Activated CD4-positive, alpha-beta memory T cell treated with anti-CD3 and anti-CD28 coated beads for 36 hours (primary cell): ENCODE measurements at regions of chr5 and their contacts with region 1.

Region 1: DNA sequence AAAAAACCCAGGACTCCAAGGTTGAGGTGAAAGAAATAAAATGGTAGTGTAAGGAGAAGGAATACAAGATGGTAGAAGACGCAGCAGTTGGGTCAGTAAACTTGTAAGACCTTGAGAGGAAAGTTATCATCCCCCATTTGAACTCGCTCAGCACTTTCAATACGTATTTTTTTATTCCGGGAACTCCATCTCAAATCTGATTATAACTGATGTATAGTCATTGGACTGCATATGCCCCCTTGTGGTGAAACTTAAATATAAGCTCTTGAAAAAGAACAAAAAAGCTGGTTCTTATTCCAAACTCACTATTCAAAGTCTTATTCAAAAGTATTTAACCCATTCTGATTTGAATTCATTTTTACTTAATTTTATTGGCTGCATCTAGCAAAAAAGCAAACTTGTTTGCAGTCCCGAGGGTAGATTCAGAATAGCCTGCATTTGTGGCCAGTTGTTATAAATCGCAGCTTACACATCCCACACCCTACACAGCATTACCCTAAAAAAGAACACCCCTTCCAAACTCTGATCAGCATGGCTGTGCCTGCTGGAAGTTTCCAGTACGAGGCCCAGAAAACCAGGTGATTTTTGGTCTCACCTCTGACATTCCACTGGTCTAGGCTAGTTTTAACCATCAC is 118.0 kb downstream of the ESM1 start:
- DNase-seq: no peak
- H3K4me3 Mint-ChIP-seq: no peak overlapping the region
- H3K27ac Mint-ChIP-seq: no peak overlapping the region
- H3K4me1 Mint-ChIP-seq: peaks cover 20% of the 10 kb centered on the region
- H3K27me3 Mint-ChIP-seq: peaks cover 40% of the 10 kb centered on the region

Region 2: DNA sequence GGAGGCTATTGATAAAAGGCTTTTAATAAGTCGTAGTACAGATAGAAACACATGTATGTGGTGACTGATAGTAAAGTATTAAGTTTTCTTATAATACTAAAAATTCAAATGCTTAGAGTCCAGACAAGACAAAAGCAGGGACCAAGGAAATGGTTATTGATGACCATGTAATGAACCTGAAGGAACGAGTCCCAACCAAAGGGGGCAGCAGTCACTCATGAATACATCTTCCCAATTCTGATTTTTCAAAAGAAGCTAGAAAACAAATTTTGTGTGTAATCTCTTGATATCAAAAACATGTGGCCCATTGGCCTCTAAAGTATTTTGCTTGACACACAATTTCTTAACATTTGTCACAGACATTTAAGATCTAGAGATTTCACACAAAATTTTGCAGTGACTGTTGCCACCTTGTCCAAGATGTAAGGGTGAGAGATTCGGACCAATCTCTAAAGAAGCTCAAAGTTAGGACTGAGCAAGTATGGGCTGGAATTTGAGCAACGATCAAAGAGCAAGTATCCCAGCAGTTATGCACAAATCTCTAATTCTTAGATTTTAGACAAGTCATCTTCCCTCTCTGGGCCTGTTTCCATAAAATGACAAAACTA is 623.9 kb before region 1 on chr5:
- CTCF ChIA-PET with region 1: interaction called, 3 read pairs
- POLR2A ChIA-PET with region 1: no interaction called
- intact Hi-C with region 1: loop called (anchors 10 kb)
- DNase-seq: peak; percentile 34
- H3K4me3 Mint-ChIP-seq: no peak overlapping the region
- H3K27ac Mint-ChIP-seq: no peak overlapping the region
- H3K4me1 Mint-ChIP-seq: no peaks in the 10 kb centered on the region
- H3K27me3 Mint-ChIP-seq: no peaks in the 10 kb centered on the region

Region 3: DNA sequence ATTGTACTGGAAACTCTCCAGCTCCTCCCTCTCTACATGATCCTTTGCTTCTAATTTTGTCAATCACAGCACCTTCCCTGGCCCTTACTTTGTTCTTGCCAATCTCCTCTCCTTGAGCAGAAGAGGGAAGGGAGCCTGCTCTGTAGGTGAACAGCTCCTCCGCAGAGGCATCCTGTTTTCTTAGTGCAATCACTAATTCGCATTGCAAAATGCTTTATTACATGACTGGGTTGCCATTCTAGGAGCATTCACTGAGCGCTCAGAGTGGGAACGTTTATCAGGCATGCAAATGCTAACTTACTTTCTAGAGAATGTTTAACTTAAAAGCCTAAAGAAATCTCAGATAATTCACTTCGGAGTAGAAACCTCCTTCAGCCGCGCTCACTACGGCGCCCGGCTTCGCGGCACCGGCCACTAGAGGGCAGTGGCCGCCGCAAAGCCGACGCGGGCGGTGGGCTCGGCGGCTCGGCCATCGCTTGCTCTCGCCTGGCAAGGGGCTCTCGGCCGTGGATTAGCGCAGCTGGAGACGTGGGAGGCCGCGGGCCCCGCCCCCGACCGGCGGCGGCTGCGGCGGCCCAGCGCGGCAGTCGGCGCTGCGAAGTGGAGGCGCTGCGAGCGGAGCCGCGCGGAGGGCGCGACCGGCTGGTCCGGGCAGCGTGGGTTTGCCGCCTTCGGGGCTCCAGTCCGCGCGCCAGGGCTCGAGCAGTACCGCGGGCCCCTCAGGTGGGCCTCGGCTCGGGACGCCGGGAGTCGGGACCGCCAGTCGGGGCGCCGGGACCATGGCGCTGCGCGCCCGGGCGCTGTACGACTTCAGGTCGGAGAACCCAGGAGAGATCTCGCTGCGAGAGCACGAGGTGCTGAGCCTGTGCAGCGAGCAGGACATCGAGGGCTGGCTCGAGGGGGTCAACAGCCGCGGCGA is 350.0 kb before region 1 on chr5 and contains the start of gene SNX18:
- CTCF ChIA-PET with region 1: interaction called, 77 read pairs
- POLR2A ChIA-PET with region 1: no interaction called
- intact Hi-C with region 1: loop called (anchors 1 kb)
- DNase-seq: peak; percentile 92
- H3K4me3 Mint-ChIP-seq: peak within 1 kb of the TSS; percentile 64
- H3K27ac Mint-ChIP-seq: no peak within 1 kb of the TSS
- H3K4me1 Mint-ChIP-seq: peaks cover 42% of the 10 kb centered on the region
- H3K27me3 Mint-ChIP-seq: no peaks in the 10 kb centered on the region
- total RNA-seq, gene SNX18: 8.5 to 8.7 TPM

Region 4: DNA sequence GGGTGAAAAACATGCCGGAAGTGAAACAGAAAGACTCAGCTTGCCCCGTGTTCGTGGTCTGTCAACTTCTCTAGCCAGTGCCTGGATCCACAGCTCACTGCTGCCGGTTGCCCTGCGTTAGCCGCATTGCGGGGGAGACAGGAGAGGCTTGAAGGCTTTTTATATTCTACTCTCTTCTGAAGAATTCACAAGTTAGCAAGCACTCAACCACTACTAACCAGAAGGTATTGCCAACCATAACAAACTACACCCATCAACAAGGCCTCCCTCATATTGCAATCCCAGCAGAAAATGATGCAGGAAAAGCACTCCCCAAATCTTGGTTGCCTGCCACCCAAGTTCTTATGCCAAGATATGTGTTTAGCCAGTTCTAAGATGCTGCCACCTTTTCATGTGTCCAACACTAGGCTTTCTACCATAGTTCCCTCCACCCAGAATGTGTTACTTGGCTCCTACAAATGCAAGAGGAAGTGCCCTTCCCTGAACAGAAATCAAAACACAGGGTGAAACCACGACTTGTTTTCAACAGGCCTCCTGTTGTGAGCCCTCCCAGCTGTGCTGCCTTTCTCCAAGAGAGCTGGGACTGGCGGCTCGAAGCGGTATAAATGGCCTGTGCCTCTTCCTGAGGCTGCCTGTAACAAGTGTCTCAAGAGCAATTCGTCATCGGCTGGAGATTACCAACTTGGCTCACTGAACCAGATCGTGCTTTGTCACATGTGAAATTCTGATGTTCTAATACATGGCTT is 220.9 kb before region 1 on chr5:
- CTCF ChIA-PET with region 1: no interaction called
- POLR2A ChIA-PET with region 1: no interaction called
- intact Hi-C with region 1: loop called (anchors 5 kb)
- DNase-seq: peak; percentile 85
- H3K4me3 Mint-ChIP-seq: peak overlapping the region; percentile 33
- H3K27ac Mint-ChIP-seq: peak overlapping the region; percentile 80
- H3K4me1 Mint-ChIP-seq: peaks cover 50% of the 10 kb centered on the region
- H3K27me3 Mint-ChIP-seq: no peaks in the 10 kb centered on the region

Region 5: DNA sequence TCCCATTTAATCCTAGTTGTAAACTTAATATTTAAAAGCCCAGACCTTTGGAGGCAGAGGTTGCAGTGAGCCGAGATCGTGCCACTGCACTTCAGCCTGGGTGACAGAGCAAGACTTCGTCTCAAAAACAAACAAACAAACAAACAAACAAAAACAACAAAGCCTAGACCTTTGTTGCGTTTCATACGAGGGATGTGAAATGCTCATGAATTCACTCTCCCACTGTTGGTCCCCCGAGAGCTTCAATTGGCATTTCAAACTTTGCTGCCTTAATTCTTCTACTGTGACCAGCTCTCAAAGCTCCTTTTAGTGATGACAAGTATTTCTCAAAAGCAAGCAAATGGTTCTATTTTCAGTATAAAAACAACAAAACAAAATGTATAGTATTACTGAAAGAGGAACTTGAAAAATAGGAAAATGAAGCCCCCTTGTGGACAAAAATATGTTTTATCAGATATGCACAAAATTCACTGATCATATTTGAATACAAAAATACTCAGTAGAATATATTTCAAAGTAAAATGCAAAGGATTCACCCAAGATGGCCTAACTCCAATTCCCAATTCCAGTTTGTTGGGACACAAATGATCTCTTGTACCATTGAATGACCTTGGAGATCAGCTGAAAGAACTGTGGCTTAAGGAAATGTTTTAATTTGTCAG is 22.4 kb before region 1 on chr5:
- CTCF ChIA-PET with region 1: interaction called, 41 read pairs
- POLR2A ChIA-PET with region 1: no interaction called
- intact Hi-C with region 1: no loop called
- DNase-seq: no peak
- H3K4me3 Mint-ChIP-seq: no peak overlapping the region
- H3K27ac Mint-ChIP-seq: no peak overlapping the region
- H3K4me1 Mint-ChIP-seq: peaks cover under 1% of the 10 kb centered on the region
- H3K27me3 Mint-ChIP-seq: peaks cover 5% of the 10 kb centered on the region

Region 6: GRCh38 chr5:54883374-54884212 is 16.2 kb after region 1 on chr5:
- CTCF ChIA-PET with region 1: interaction called, 26 read pairs
- POLR2A ChIA-PET with region 1: interaction called, 3 read pairs
- intact Hi-C with region 1: no loop called
- DNase-seq: no peak
- H3K4me3 Mint-ChIP-seq: peak overlapping the region; percentile 54
- H3K27ac Mint-ChIP-seq: no peak overlapping the region
- H3K4me1 Mint-ChIP-seq: peaks cover 11% of the 10 kb centered on the region
- H3K27me3 Mint-ChIP-seq: peaks cover 63% of the 10 kb centered on the region

Region 7: DNA sequence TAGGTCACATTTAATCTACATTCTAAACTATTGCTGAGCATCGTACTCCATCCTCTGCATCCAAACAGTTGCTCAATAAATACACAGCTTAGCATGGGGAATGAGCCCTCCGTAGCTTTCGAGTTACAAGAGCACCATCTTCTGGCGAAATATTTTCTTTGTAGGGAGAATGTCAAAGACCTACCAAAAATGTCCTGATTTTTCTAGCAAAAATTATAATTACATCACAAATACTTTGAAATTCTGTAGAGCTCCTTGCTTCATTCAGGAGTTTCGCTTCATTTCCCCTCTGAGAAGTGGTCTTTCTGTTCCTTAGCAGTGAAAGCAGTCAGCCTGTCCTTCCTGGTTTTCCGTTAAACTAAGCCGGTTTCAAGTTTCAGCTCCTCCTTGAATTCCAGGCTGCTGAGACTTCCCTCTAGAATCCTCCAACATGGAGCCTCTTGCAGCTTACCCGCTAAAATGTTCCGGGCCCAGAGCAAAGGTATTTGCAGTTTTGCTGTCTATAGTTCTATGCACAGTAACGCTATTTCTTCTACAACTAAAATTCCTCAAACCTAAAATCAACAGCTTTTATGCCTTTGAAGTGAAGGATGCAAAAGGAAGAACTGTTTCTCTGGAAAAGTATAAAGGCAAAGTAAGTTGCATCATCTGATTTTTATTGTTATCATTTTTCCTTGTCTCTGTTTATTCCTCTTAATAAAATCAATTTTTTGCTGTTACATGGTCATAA is 292.5 kb after region 1 on chr5 and contains the start of gene GPX8:
- CTCF ChIA-PET with region 1: interaction called, 16 read pairs
- POLR2A ChIA-PET with region 1: no interaction called
- intact Hi-C with region 1: no loop called
- DNase-seq: no peak
- H3K4me3 Mint-ChIP-seq: no peak within 1 kb of the TSS
- H3K27ac Mint-ChIP-seq: no peak within 1 kb of the TSS
- H3K4me1 Mint-ChIP-seq: no peaks in the 10 kb centered on the region
- H3K27me3 Mint-ChIP-seq: peaks cover 16% of the 10 kb centered on the region
- total RNA-seq, gene GPX8: not detected

Region 8: GRCh38 chr5:55485073-55485472 is 617.6 kb after region 1 on chr5:
- CTCF ChIA-PET with region 1: no interaction called
- POLR2A ChIA-PET with region 1: no interaction called
- intact Hi-C with region 1: no loop called
- DNase-seq: no peak
- H3K4me3 Mint-ChIP-seq: no peak overlapping the region
- H3K27ac Mint-ChIP-seq: no peak overlapping the region
- H3K4me1 Mint-ChIP-seq: peaks cover 11% of the 10 kb centered on the region
- H3K27me3 Mint-ChIP-seq: no peaks in the 10 kb centered on the region